H1 (cell line): ENCODE measurements at regions of chr17 and their contacts with region 1.

Region 1: DNA sequence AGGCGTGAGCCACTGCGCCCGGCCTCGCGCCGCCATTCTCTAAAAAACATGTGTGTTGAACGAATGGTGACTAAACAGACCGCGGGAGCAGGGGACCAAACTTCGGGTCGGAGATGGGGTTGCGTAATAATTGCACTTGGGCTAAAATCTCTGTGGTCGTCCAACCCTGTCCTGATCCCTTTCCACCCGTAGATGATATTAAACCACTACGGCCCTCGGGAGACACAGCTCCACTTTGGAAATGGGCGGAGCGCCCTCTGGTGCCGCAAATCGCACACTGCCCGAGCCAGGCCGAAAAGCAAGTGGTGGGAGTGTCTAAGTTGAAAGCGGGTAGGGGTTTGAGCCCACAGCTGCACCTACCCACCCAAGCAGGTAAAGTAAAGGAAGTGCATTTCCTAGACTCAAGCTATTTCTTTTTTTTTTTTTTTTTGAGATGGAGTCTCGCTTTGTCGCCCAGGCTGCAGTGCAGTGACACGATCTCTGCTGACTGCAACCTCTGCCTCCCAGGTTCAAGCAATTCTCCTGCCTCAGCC is 17.0 kb downstream of the CAVIN1 start:
- DNase-seq: peak in 1 of 2 experiments; percentile 96
- H3K4me3 ChIP-seq: no peak overlapping the region
- H3K27ac ChIP-seq: no peak overlapping the region
- H3K4me1 ChIP-seq: peaks cover 8 to 22% (median 17%) of the 10 kb centered on the region in 4 experiments; a peak in 6 of 7 replicates
- H3K27me3 ChIP-seq: no peaks in the 10 kb centered on the region
- CTCF ChIP-seq: peak; percentile 90 to 94 (median 93)
- EP300 ChIP-seq: no peak
- POLR2A ChIP-seq: no peak
- RAD21 ChIP-seq: peak; percentile 95 to 97

Region 2: DNA sequence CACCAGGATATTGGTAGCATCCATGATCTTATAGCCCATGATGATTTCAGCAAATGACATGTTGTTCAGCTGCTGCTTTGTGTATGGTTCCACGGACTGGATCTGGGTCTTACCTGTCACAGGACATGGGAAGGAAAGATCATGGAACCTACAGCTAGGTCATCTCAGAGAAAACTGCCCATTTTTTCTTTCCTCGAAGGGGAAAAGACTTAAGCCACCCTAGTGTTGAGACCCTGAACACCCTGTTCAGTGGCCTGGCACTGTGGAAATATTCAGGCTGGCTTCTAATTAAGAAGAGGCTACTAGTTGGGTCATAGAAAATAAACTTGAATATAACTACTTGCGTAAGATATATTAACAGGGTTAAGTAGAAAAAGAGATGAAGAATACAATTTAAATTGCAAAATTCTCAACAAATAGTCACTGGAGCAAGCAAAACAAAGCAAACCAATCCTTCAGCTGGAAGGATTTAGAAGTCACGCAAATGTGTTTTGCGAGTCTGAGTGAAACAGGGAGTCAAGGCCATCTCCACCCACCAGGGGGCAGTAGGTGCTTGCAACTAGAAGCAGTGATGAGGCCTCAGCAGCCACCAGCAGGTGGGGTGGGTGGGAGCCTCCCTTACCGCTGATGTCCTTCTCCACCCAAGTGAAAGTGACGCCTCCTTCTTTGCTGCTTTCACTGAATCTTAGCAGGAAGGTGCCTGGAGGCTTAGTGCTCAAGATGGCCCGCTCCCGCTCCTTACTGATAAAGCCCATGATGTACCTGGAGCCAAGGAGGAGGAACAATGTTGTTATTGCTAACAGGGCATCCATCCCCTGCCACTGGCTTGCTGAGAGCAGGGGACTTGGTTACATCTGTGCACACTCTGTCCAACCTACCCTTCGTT is 83.4 kb before region 1 on chr17:
- CTCF ChIA-PET with region 1: interaction called, 542 read pairs
- POLR2A ChIA-PET with region 1: interaction called, 9 read pairs
- DNase-seq: peak; percentile 92 to 97
- H3K4me3 ChIP-seq: no peak overlapping the region
- H3K27ac ChIP-seq: no peak overlapping the region
- H3K4me1 ChIP-seq: peaks cover 0 to 6% (median 2%) of the 10 kb centered on the region in 4 experiments; a peak in 3 of 7 replicates
- H3K27me3 ChIP-seq: no peaks in the 10 kb centered on the region
- CTCF ChIP-seq: peak; percentile 100
- EP300 ChIP-seq: no peak
- POLR2A ChIP-seq: no peak
- RAD21 ChIP-seq: peak; percentile 99 to 100

Region 3: GRCh38 chr17:42358434-42358833 is 47.6 kb before region 1 on chr17:
- CTCF ChIA-PET with region 1: interaction called, 10 read pairs
- POLR2A ChIA-PET with region 1: interaction called, 3 read pairs
- DNase-seq: no peak
- H3K4me3 ChIP-seq: no peak overlapping the region
- H3K27ac ChIP-seq: no peak overlapping the region
- H3K4me1 ChIP-seq: peaks cover 4 to 17% (median 14%) of the 10 kb centered on the region in 4 experiments
- H3K27me3 ChIP-seq: no peaks in the 10 kb centered on the region
- CTCF ChIP-seq: no peak
- EP300 ChIP-seq: no peak
- POLR2A ChIP-seq: no peak
- RAD21 ChIP-seq: no peak

Region 4: GRCh38 chr17:42422958-42423712 is 17.1 kb after region 1 on chr17 and contains the start of gene CAVIN1:
- CTCF ChIA-PET with region 1: interaction called, 36 read pairs
- POLR2A ChIA-PET with region 1: interaction called, 19 read pairs
- DNase-seq: peak; percentile 89 to 94
- H3K4me3 ChIP-seq: peak within 1 kb of the TSS; percentile 73 to 99 (median 86)
- H3K27ac ChIP-seq: no peak within 1 kb of the TSS
- H3K4me1 ChIP-seq: peaks cover 0 to 17% (median 8%) of the 10 kb centered on the region in 4 experiments; a peak in 5 of 7 replicates
- H3K27me3 ChIP-seq: peaks cover 0 to 13% (median 10%) of the 10 kb centered on the region in 4 experiments; a peak in 6 of 7 replicates
- CTCF ChIP-seq: no peak
- EP300 ChIP-seq: 0 out of 3 replicates have a peak, but pooled peaks of 1 of the 2 experiments have one; percentile 33
- POLR2A ChIP-seq: peak; percentile 33 to 93
- RAD21 ChIP-seq: no peak
- total RNA-seq, gene CAVIN1: 41.6 and 43.5 TPM in 2 replicates

Region 5: GRCh38 chr17:42527273-42527703 is 121.3 kb after region 1 on chr17:
- CTCF ChIA-PET with region 1: interaction called, 13 read pairs
- POLR2A ChIA-PET with region 1: no interaction called
- DNase-seq: peak in 1 of 2 experiments; percentile 88
- H3K4me3 ChIP-seq: no peak overlapping the region
- H3K27ac ChIP-seq: no peak overlapping the region
- H3K4me1 ChIP-seq: no peaks in the 10 kb centered on the region; a peak in 1 of 7 replicates
- H3K27me3 ChIP-seq: peaks cover 0 to 6% (median 0%) of the 10 kb centered on the region in 4 experiments; a peak in 3 of 7 replicates
- CTCF ChIP-seq: peak; percentile 89 to 98 (median 96)
- EP300 ChIP-seq: no peak
- POLR2A ChIP-seq: no peak
- RAD21 ChIP-seq: peak; percentile 93 to 96